Dorsolateral prefrontal cortex (tissue), 120 donors: ENCODE measurements at regions of chr9 and their contacts with region 1.

Region 1: GRCh38 chr9:128881901-128882681 is at the starts of genes KYAT1 and LRRC8A:
- DNase-seq: peak; percentile 96 to 99 (median 97)
- H3K4me3 ChIP-seq: peak within 1 kb of the TSS; percentile 70 to 100 (median 96)
- H3K27ac ChIP-seq: peak within 1 kb of the TSS; percentile 91 to 100 (median 98)
- H3K27me3 ChIP-seq: no peaks in the 10 kb centered on the region
- CTCF ChIP-seq: peak in 33 of 56 donors; percentile 10 to 65 (median 35)
- total RNA-seq, gene KYAT1: 22.3 to 55.0 (median 36.5) TPM
- total RNA-seq, gene LRRC8A: 63.8 to 213 (median 95.1) TPM

Region 2: GRCh38 chr9:128702445-128702948 is 179.6 kb before region 1 on chr9 and contains the start of gene PKN3:
- intact Hi-C with region 1: no loop called
- DNase-seq: peak; percentile 47 to 85 (median 66)
- H3K4me3 ChIP-seq: peak within 1 kb of the TSS; percentile 47 to 95 (median 72)
- H3K27ac ChIP-seq: peak within 1 kb of the TSS in 45 of 59 donors; percentile 2 to 82 (median 60)
- H3K27me3 ChIP-seq: no peaks in the 10 kb centered on the region
- CTCF ChIP-seq: peak; percentile 63 to 97 (median 83)
- total RNA-seq, gene PKN3: 1.0 to 8.5 (median 3.1) TPM

Region 3: DNA sequence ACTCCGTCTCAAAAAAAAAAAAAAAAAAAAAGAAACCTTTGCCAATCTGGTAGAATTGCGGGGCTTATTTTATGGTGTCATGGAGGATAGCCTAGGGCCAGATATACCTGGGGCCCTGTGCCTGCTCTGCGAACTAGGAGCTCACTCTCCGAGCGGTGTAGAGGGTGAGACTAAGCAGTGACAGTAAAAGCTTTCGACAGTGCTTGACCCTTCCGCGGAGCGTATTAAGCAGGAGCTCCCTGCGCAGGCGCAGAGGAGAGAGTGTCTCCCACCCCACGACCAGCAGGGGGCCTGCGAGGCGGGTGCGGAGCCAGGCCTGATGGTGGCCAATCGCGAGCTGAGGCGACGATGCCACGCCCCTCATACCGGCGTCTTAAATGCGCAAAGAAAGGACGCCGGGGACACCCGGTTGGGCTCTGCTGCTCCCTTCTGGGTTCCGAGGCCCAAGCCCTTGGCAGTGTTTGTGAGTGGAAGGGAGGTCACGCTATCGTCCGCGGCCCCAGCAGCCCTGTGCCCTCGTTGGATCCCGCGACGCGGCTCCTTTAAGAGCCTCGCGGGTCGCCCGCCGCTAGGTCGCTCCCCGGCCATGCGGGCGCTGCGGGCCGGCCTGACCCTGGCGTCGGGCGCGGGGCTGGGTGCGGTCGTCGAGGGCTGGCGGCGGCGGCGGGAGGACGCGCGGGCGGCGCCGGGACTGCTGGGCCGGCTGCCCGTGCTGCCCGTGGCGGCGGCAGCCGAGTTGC is 63.8 kb before region 1 on chr9 and contains the start of gene ENDOG:
- intact Hi-C with region 1: no loop called
- DNase-seq: peak; percentile 97 to 99 (median 98)
- H3K4me3 ChIP-seq: peak within 1 kb of the TSS; percentile 48 to 90 (median 74)
- H3K27ac ChIP-seq: peak within 1 kb of the TSS; percentile 36 to 95 (median 89)
- H3K27me3 ChIP-seq: no peaks in the 10 kb centered on the region
- CTCF ChIP-seq: peak; percentile 69 to 98 (median 90)
- total RNA-seq, gene ENDOG: 20.4 to 57.3 (median 35.8) TPM

Region 4: GRCh38 chr9:128892317-128892921 is 10.3 kb after region 1 on chr9:
- intact Hi-C with region 1: loop called in 1 of 2 experiments (anchors 1 kb)
- DNase-seq: peak; percentile 44 to 93 (median 91)
- H3K4me3 ChIP-seq: peak overlapping the region in 50 of 59 donors; percentile 0 to 55 (median 26)
- H3K27ac ChIP-seq: peak overlapping the region; percentile 87 to 100 (median 98)
- H3K27me3 ChIP-seq: no peaks in the 10 kb centered on the region
- CTCF ChIP-seq: peak in 4 of 56 donors; percentile 3 to 13 (median 10)

Region 5: GRCh38 chr9:128927731-128928411 is 45.8 kb after region 1 on chr9:
- intact Hi-C with region 1: loop called (anchors 5 kb)
- DNase-seq: peak in 8 of 10 donors; percentile 42 to 72 (median 54)
- H3K4me3 ChIP-seq: no peak overlapping the region
- H3K27ac ChIP-seq: peak overlapping the region in 35 of 59 donors; percentile 7 to 67 (median 44)
- H3K27me3 ChIP-seq: no peaks in the 10 kb centered on the region
- CTCF ChIP-seq: peak; percentile 64 to 97 (median 92)

Region 6: GRCh38 chr9:128947422-128948301 is 65.6 kb after region 1 on chr9 and contains the starts of genes DOLK and NUP188:
- intact Hi-C with region 1: loop called in 1 of 2 experiments (anchors 5 kb)
- DNase-seq: peak; percentile 91 to 99 (median 96)
- H3K4me3 ChIP-seq: peak within 1 kb of the TSS; percentile 63 to 100 (median 92)
- H3K27ac ChIP-seq: peak within 1 kb of the TSS; percentile 52 to 97 (median 92)
- H3K27me3 ChIP-seq: no peaks in the 10 kb centered on the region
- CTCF ChIP-seq: peak in 14 of 56 donors; percentile 11 to 54 (median 25)
- total RNA-seq, gene DOLK: 3.6 to 13.2 (median 8.4) TPM
- total RNA-seq, gene NUP188: 23.7 to 70.4 (median 41.1) TPM

Region 7: GRCh38 chr9:128972956-128973355 is 90.9 kb after region 1 on chr9:
- intact Hi-C with region 1: no loop called
- DNase-seq: no peak
- H3K4me3 ChIP-seq: no peak overlapping the region
- H3K27ac ChIP-seq: no peak overlapping the region
- H3K27me3 ChIP-seq: no peaks in the 10 kb centered on the region
- CTCF ChIP-seq: no peak